H1 (cell line): ENCODE measurements at regions of chr3 and their contacts with region 1.

Region 1: DNA sequence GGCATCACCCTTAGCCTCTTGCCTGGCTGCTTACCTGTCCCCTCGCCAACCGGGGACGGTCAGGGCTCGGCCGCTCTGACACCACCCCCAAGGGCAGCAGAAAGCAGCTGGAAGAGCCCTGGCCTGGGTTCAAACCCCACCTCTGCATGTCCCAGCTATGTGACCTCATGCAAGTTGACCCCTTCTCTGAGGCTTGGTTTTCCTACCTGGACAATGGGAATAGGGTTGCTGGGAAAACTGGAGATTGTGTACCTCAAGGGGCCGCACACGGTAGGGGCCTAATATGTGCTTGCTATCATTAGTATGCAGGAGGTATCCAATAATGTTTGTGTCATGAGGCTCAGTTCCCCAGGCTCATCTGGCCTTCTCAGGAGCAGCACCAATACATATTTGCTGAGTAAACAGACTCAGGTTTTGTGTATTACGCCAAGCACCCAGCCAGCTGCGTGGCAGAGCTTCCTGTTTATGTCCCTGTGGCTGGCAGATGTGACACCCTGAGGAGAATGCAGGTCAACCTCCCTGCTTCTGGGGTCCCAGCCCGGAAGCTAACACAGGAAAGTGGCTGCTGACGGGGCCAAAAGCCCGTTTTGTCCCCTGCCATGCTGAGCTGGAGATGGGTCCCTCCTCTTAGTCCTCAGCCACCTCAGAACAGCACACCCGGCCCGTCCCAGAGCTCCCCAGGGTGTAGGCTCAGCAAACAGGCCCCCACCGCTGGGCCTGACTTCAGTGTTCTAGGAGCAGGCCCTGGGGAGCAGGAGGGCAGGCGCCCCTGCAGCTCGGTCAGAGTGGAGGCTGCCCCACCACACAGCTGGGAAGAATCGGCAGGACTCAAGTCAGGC is 29.7 kb downstream of the PLXND1 start:
- DNase-seq: no peak
- H3K4me3 ChIP-seq: no peak overlapping the region
- H3K27ac ChIP-seq: no peak overlapping the region
- H3K4me1 ChIP-seq: peaks cover 0 to 19% (median 2%) of the 10 kb centered on the region in 4 experiments; a peak in 4 of 7 replicates
- H3K27me3 ChIP-seq: no peaks in the 10 kb centered on the region
- CTCF ChIP-seq: no peak
- EP300 ChIP-seq: no peak
- POLR2A ChIP-seq: no peak
- RAD21 ChIP-seq: no peak

Region 2: DNA sequence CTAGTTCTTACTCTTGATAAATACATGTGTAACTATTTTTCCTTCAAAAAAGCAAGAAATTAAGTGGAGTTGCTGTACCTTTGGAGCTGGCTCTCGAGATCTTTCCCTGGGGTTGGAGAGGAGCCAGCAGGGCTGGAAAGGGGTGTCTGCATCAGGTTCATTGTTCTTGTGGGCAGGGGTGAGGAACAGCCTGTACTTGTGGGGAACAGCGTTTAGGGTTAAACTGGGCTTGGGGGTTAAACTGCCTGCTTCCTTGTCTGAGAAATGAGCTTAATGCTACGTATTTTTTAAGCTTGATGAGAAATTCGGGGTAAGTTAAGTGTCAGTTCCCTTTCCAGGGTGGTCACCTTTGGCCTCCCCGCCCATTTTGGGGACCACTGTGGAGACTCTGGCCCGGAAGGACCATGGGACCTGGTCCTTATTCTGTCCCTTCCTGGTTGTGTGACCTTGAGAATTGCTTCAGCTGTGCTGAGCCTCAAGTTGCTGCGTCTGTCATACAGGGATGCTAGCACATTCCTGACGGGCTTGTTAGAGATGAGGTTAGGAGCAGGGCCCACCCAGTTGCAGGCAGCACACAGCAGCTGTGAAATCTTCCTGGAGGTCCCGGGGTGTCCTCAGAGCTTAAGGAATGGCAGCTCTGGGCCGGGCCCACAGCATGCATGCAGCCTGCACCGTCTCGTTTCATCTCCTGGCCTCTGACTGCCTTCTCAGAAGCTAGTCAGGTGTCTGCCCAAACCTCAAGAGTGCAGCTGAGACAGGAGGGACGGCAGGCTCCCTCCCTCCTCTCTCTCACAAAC is 22.2 kb before region 1 on chr3:
- CTCF ChIA-PET with region 1: interaction called, 10 read pairs
- POLR2A ChIA-PET with region 1: no interaction called
- DNase-seq: no peak
- H3K4me3 ChIP-seq: no peak overlapping the region
- H3K27ac ChIP-seq: no peak overlapping the region
- H3K4me1 ChIP-seq: peaks cover 3 to 22% (median 11%) of the 10 kb centered on the region in 4 experiments
- H3K27me3 ChIP-seq: no peaks in the 10 kb centered on the region; a peak in 1 of 7 replicates
- CTCF ChIP-seq: no peak
- EP300 ChIP-seq: no peak
- POLR2A ChIP-seq: no peak
- RAD21 ChIP-seq: no peak

Region 3: DNA sequence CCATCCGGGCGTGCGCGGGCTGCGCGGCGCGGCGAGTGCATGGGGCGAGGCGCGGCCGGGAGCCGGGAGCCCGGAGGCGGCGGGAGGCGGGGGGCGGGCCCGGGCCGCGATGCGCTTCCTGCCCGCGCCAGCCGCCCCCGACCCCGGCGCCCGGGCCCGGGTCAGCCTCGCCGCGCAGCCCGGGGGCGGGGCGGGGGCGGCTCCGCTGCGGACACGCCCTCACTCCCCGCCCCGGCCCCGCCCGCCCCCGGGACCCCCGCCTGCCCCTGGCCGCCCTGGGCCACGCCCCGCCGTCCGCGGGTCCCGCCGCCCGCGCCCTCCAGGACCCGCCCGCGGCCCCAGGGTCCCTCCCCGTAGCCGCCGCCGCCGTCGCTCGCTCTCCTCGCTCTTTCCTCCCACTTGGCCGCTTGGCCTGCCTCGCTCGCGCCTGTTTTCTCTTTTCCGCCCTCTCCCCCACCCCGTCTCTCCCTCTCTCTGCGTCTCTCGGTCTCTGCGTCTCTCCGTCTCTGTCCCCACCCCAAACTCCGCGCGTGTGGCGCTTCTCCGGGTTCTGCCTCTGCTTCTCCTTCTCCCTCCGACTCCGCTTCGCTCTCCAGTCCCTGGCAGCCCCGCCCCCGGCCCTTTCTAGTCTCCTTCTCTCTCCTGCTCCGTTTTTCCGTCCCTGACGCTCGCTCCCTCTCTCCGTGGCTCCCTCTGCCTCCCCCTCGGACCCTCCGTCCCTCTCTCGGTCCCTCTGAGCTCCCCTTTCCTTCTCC is 30.1 kb after region 1 on chr3 and contains the start of gene PLXND1:
- CTCF ChIA-PET with region 1: interaction called, 10 read pairs
- POLR2A ChIA-PET with region 1: no interaction called
- DNase-seq: peak in 1 of 2 experiments; percentile 78
- H3K4me3 ChIP-seq: peak within 1 kb of the TSS; percentile 46 to 76 (median 62)
- H3K27ac ChIP-seq: no peak within 1 kb of the TSS
- H3K4me1 ChIP-seq: peaks cover 4 to 52% (median 43%) of the 10 kb centered on the region in 4 experiments
- H3K27me3 ChIP-seq: peaks cover 7 to 31% (median 22%) of the 10 kb centered on the region in 4 experiments; a peak in 6 of 7 replicates
- CTCF ChIP-seq: no peak
- EP300 ChIP-seq: no peak
- POLR2A ChIP-seq: no peak
- RAD21 ChIP-seq: no peak
- total RNA-seq, gene PLXND1: 60.2 and 66.4 TPM in 2 replicates